ENCODE measurements at regions of chr11 and their contacts with region 1.

Region 1: GRCh38 chr11:6481012-6481923 is at the starts of genes ARFIP2 and TIMM10B:
- H3K4me3 ChIP-seq: peak within 1 kb of the TSS; percentile 73
- H3K27ac ChIP-seq: peak within 1 kb of the TSS; percentile 28
- H3K4me1 ChIP-seq: no peaks in the 10 kb centered on the region
- CTCF ChIP-seq: no peak

Region 2: DNA sequence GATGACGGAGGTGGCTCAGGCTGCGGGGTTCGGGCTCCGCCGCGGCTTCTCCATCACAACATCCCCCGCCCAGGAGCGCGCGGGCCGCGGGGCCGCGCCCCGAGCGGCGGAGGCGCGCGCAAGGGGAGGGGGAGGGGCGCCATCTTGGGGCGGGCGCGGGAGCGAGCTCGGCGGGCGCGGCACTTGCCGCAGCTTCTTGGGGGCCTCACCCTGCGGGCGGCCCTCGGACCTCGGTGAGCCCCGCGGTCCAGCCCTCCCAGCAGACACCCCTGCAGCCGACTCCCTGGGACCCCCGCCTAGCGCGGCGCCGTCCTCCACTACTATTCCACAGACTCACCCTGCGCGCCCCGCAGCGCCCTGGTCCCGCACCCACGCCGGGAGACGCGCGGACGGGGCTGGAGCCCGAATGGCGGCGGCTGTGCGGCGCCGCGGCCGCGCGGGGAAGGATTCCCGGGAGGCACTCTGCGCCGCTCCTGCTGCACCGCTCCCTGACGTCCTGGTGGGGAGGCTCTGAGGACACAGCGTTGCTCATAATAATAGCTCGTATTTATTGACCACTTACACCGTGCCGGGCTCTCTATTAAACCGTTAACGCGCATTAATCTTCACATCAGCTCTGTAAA is 62.1 kb before region 1 on chr11 and contains the start of gene APBB1:
- CTCF ChIA-PET with region 1: no interaction called
- POLR2A ChIA-PET with region 1: interaction called, 14 read pairs
- H3K4me3 ChIP-seq: peak within 1 kb of the TSS; percentile 92
- H3K27ac ChIP-seq: peak within 1 kb of the TSS; percentile 69; the same call in 1 of the 2 replicates
- H3K4me1 ChIP-seq: no peaks in the 10 kb centered on the region
- CTCF ChIP-seq: no peak